Endothelial cell of umbilical vein (primary cell): ENCODE measurements at regions of chr3 and their contacts with region 1.

Region 1: GRCh38 chr3:47617086-47618010 is 38.7 kb upstream of the CSPG5 start:
- DNase-seq: peak; percentile 67
- H3K4me3 ChIP-seq: no peak overlapping the region
- H3K27ac ChIP-seq: no peak overlapping the region
- H3K4me1 ChIP-seq: peaks cover 5% of the 10 kb centered on the region
- H3K27me3 ChIP-seq: no peaks in the 10 kb centered on the region
- CTCF ChIP-seq: no peak
- POLR2A ChIP-seq: no peak

Region 2: GRCh38 chr3:47628426-47628825 is 11.1 kb after region 1 on chr3:
- CTCF ChIA-PET with region 1: interaction called, 13 read pairs
- POLR2A ChIA-PET with region 1: no interaction called
- dilution Hi-C with region 1: no loop called
- intact Hi-C with region 1: no loop called
- DNase-seq: no peak
- H3K4me3 ChIP-seq: no peak overlapping the region
- H3K27ac ChIP-seq: no peak overlapping the region
- H3K4me1 ChIP-seq: no peaks in the 10 kb centered on the region
- H3K27me3 ChIP-seq: no peaks in the 10 kb centered on the region
- CTCF ChIP-seq: no peak
- POLR2A ChIP-seq: no peak